ENCODE measurements at regions of chr5 and their contacts with region 1.

Region 1: DNA sequence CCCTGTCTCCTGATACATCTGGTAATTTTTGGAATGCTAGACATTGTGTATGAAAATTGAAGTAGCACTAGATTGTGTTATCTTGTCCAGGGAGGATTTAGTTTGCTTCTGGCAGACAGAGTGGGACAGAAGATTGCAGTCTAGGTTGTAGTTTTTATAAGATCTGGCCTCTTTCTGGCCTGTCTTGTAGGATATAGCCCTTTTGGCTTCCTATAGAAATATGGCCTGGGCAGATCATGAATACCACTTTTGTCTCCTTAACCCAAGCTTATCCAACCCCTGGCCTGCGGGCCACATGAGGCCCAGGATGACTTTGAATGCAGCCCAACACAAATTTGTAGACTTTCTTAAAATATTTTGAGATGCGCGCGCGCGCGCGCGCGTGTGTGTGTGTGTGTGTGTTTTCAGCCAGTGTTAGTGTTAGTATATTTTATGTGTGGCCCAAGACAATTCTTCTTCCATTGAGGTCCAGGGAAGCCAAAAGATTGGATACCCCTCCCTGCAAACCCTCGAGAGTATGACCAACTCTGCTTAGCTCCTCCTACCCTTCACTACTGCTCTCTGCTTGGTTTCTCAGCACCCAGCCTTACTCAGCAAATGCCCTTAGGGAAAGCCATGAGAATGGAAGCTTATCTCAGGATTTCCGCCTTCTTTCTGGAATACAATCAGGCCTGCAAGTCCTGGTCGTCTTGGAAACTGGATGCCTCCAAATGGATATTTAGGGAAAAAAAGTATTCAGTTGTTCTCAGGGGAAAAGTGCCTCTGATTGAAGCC is 26.5 kb downstream of the ANKRD33B start:
- DNase-seq: peak; percentile 97
- H3K4me3 ChIP-seq: no peak overlapping the region
- H3K27ac ChIP-seq: peak overlapping the region; percentile 49
- H3K4me1 ChIP-seq: peaks cover 27% of the 10 kb centered on the region
- H3K27me3 ChIP-seq: no peaks in the 10 kb centered on the region
- CTCF ChIP-seq: no peak
- POLR2A ChIP-seq: no peak

Region 2: DNA sequence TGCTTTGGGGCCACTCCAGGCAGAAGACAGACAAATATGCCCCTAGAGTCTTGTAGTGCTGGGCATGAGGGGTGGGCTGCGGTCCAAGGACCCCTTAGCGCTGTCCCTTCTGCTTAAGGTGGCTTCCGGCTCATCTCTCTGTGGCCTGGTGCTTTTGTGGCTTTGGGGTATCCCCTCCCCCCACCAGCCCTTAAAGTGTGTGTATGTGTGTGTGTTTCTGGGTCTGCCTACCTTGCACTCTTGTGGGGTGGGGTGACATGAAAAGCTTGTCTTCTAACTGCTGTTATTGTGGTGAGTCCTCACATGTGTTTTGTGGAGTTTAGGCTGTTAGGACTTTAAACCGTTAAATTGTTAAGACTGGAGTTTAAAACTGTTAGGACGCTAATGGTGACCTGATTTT is 213.3 kb before region 1 on chr5:
- CTCF ChIA-PET with region 1: no interaction called
- POLR2A ChIA-PET with region 1: no interaction called
- dilution Hi-C with region 1: no loop called
- intact Hi-C with region 1: no loop called
- DNase-seq: no peak
- H3K4me3 ChIP-seq: no peak overlapping the region
- H3K27ac ChIP-seq: no peak overlapping the region
- H3K4me1 ChIP-seq: no peaks in the 10 kb centered on the region
- H3K27me3 ChIP-seq: no peaks in the 10 kb centered on the region
- CTCF ChIP-seq: no peak
- POLR2A ChIP-seq: no peak

Region 3: DNA sequence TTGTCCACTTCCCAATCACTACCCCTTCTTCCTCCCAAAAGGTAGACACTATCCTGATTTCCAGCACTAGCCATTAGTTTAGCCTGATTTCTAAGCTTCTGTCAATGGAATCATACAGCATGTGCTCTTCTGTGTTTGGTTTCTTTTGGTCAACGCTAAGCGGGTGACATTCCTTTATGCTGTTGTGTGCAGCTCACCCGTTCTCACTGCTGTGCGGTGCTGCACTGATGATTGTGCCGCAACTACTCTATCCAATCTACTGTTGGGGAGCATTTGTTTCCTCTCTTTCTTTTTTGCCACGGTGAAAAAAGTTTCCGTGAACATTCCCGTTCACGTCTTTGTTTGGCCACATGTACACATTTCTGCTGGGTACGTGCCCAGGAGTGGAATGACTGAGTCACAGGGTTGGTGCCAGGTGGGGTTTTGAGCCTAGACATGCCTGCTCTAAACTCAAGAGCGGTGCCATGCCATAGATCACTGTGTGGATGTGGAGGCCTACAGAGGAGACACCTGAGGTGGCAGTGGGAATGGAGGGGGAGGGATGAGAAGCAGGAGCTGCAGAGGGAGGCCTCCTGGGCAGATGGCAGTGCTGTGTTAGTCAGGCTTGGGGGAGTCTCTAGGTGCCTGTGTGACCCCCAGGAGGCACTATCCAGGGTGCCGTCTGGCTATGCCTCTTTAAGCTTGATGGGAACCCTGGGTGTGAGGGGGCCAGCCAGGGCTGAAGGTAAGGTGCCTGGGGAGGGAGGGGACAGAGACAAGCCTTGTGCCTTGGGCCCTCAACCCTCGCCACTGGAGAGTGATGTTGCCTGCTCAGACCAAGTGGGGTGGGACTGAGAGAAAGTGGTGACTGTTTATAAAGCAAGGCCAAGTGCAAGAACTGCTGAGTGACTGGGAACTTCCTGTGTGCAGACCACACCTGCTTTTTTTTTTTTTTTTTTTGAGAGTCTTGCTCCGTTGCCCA is 38.0 kb before region 1 on chr5:
- CTCF ChIA-PET with region 1: interaction called, 3 read pairs
- POLR2A ChIA-PET with region 1: no interaction called
- dilution Hi-C with region 1: no loop called
- intact Hi-C with region 1: loop called (anchors 1 kb)
- DNase-seq: peak; percentile 44
- H3K4me3 ChIP-seq: no peak overlapping the region
- H3K27ac ChIP-seq: peak overlapping the region; percentile 87
- H3K4me1 ChIP-seq: peaks cover 33% of the 10 kb centered on the region
- H3K27me3 ChIP-seq: no peaks in the 10 kb centered on the region
- CTCF ChIP-seq: no peak
- POLR2A ChIP-seq: no peak

Region 4: DNA sequence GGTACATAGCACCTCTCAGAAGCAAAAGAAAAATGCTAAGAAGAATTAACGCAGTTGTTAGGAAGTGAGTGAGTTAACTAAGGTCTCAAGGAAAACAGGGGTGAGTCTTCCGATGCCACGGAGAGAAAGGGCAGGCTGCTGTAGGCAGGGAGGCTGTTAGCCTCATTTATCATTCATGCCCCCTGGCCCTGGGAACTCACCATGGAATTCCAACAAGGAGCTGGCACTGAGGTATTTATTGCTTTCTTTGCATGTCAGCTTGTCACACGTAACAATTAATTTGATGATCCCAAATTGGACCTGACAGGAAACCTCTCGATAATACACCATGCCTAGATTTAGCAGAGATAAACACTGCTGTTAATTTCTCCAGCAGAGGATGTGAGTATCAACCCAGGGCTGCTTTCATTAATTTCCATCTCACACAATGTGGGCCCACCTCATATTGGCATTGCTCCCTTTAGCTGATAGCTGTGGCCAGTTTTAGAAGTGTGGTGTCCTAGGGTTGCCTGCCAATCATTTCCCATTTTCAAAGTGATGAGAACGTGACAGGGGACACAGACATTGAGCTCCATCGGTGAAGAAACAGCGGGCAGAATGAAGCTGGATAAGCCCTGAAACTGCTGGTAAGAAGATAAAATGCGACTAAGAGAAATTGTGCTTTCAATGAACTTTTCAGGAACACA is 125.3 kb after region 1 on chr5:
- CTCF ChIA-PET with region 1: no interaction called
- POLR2A ChIA-PET with region 1: no interaction called
- dilution Hi-C with region 1: no loop called
- intact Hi-C with region 1: no loop called
- DNase-seq: no peak
- H3K4me3 ChIP-seq: no peak overlapping the region
- H3K27ac ChIP-seq: no peak overlapping the region
- H3K4me1 ChIP-seq: peaks cover 12% of the 10 kb centered on the region
- H3K27me3 ChIP-seq: no peaks in the 10 kb centered on the region
- CTCF ChIP-seq: no peak
- POLR2A ChIP-seq: no peak